ENCODE measurements at regions of chr16 and their contacts with region 1.

Region 1: DNA sequence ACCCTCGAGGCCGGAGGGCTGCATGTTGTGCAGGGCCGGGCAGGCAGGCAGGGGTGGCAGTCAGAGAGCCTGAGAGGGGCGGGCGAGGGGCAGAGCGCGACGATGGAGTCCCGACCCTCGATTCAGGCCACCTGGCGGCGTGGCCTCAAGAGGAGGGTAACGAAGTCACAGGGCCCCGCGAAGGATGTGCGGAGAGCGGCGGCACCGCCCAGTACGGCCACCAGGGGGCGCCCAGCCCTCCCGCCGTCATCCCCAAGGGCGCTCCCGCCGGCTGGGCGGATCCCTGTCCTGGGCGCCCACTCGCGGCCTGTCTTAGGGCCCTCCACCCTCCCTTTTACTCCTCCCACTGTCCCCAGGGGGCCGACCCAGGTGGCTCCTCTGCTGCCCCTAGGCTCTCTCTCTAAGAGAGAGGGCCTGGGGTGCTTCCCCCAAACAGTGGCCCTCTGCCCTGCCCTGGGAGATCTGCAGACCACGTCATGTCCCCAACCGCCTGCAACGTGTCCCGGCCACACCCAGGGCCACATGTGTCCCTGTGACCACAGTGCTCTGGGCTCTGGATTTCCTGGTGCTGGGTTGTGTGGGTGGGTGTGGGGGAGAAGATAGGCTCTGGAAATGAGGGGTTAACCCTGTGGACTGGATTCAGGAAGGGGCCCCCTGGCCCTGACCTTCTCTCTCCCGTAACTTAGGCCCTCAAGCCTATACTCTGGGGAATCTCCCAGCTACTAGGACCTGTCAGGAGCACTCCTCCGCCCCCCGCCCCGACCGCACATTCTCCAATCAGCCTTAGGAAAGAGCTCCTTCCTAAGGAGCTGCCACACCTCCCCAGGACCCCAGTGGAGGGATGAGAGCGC is 5.9 kb downstream of the DPEP2 start:
- DNase-seq: peak; percentile 70 to 91 (median 79)
- ATAC-seq: peak; percentile 92
- H3K4me3 ChIP-seq: peak overlapping the region; percentile 38 to 41
- H3K4me3 Mint-ChIP-seq: peak overlapping the region; percentile 83
- H3K27ac ChIP-seq: peak overlapping the region; percentile 52 to 87
- H3K27ac Mint-ChIP-seq: peak overlapping the region; percentile 95
- H3K4me1 ChIP-seq: peaks cover 34% of the 10 kb centered on the region
- H3K4me1 Mint-ChIP-seq: peaks cover 34% of the 10 kb centered on the region
- H3K27me3 ChIP-seq: no peaks in the 10 kb centered on the region
- H3K27me3 Mint-ChIP-seq: no peaks in the 10 kb centered on the region
- CTCF ChIP-seq: peak; percentile 87

Region 2: DNA sequence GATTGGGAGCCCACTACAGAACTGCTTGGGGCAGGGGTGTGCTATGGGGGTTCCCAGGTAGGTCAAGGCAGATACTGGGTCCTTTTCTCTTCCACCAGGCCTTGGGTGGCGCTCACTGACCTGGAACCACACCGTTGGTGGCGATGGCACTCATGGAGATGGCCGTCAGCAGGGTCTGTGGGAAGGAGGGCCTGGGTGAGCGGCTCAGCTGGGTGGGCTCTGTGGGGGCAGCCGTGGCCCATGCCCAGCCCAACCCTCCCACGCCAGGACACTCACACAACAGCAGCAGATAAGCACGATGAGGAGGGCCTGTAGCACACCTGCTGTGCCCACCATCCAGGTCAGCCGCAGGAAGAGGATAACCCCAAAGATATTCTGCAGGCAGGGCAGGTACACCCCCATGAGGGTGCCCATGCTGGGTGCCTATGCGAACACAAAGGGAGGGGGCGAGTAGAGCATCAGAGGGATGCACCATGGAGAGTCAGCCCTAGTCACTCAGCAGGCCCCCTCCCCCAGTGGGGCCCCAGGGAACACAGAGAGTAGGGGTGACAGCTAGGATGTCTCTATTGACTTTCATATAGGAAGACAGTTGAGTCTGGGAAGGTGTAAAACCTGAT is 35.7 kb before region 1 on chr16:
- CTCF ChIA-PET with region 1: no interaction called
- POLR2A ChIA-PET with region 1: no interaction called
- intact Hi-C with region 1: no loop called
- DNase-seq: no peak
- ATAC-seq: no peak
- H3K4me3 ChIP-seq: no peak overlapping the region
- H3K4me3 Mint-ChIP-seq: no peak overlapping the region
- H3K27ac ChIP-seq: no peak overlapping the region
- H3K27ac Mint-ChIP-seq: no peak overlapping the region
- H3K4me1 ChIP-seq: no peaks in the 10 kb centered on the region
- H3K4me1 Mint-ChIP-seq: no peaks in the 10 kb centered on the region
- H3K27me3 ChIP-seq: no peaks in the 10 kb centered on the region
- H3K27me3 Mint-ChIP-seq: no peaks in the 10 kb centered on the region
- CTCF ChIP-seq: no peak

Region 3: DNA sequence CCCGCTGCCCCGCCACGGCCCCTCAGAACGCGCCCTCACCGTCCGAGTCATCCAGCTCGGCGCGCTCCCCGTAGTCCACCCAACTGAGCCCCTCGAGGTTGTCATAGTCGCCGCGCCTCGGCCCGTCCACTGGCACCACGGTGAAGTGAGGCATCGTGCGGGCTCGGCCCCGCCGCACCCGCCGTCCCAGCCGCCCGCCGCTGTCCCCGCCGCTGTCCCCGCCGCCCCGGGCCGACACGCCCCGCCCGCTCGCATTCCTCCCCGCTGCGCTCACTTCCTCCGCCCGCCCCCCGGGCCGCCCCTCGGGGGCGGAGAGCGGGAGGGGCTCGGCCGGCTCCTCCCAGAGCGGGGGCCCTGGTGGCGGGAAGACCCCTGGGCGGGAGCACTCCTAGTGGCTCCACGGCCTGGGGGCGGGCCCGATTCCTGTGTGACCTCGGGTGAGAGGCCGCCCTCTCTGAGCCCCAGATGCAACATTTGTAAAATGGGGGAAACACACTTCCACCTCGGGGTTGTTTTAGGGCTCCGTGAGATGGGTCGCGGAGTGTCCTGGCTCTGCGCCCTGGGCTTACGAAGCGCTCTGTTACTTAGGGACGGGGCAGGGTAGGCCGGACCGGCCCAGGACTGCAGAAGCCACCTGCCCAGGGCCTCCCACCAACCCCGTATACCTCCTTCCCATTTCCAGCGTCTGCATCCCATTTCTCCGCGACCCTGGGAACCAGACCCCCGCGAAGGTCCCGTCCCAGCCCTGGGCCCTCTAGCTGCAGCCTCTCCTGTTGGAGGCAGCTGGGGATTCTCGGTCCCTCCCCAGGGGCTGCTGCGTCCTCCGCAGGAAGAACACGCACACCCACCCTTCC is 24.8 kb before region 1 on chr16 and contains the start of gene SLC12A4:
- CTCF ChIA-PET with region 1: interaction called, 3 read pairs
- POLR2A ChIA-PET with region 1: no interaction called
- intact Hi-C with region 1: loop called in 1 of 2 experiments (anchors 2 kb)
- DNase-seq: peak; percentile 66 to 93 (median 86)
- ATAC-seq: peak; percentile 90
- H3K4me3 ChIP-seq: peak within 1 kb of the TSS; percentile 78 to 97
- H3K4me3 Mint-ChIP-seq: peak within 1 kb of the TSS; percentile 83
- H3K27ac ChIP-seq: peak within 1 kb of the TSS; percentile 44 to 59
- H3K27ac Mint-ChIP-seq: peak within 1 kb of the TSS; percentile 94
- H3K4me1 ChIP-seq: peaks cover 15% of the 10 kb centered on the region
- H3K4me1 Mint-ChIP-seq: peaks cover 21% of the 10 kb centered on the region
- H3K27me3 ChIP-seq: no peaks in the 10 kb centered on the region
- H3K27me3 Mint-ChIP-seq: no peaks in the 10 kb centered on the region
- CTCF ChIP-seq: no peak
- total RNA-seq, gene SLC12A4: 20.1 to 20.7 TPM

Region 4: DNA sequence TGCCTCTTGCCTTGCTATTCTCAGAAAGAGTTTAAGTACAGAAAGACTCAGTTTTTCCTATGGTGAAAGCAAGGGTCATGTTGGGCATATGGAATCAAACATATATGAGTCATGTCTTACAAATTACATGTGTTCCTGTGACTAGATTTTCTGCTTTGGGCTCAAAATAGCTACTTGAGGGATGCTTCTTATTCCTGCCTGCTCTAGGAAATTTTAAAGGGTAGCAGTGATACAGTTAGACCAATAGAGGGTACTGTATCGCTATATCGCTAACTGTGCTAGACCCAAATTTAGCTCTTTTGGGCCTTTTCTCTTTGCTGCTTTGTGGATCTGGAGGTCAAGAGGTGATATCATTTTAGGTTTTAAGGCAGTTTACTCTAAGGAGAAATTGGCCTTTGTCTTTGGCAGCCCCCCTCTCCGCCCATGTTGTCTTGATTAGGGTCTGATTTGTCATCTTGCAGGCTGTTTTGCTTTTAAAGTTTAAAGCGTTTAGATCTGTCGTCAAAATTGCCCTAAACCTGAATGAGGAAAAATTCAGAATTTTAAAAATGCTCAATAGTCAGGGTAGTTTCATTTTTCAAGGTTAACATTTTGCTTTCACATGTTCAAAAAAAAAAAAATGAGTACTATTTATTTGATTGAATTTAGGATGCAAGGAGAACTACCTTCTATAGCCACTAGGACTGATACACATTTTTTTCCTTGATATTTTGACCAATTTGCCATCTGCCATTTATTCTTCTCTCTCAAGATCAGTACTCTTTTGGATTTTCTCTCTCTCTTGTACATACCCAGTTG is 100.6 kb after region 1 on chr16:
- CTCF ChIA-PET with region 1: no interaction called
- POLR2A ChIA-PET with region 1: no interaction called
- intact Hi-C with region 1: no loop called
- DNase-seq: peak in 2 of 9 experiments; percentile 54 to 69
- ATAC-seq: peak; percentile 88
- H3K4me3 ChIP-seq: no peak overlapping the region
- H3K4me3 Mint-ChIP-seq: peak overlapping the region; percentile 57
- H3K27ac ChIP-seq: peak overlapping the region in 1 of 2 experiments; percentile 38
- H3K27ac Mint-ChIP-seq: peak overlapping the region; percentile 87
- H3K4me1 ChIP-seq: peaks cover 89% of the 10 kb centered on the region
- H3K4me1 Mint-ChIP-seq: peaks cover 83% of the 10 kb centered on the region
- H3K27me3 ChIP-seq: no peaks in the 10 kb centered on the region
- H3K27me3 Mint-ChIP-seq: no peaks in the 10 kb centered on the region
- CTCF ChIP-seq: peak; percentile 69